ENCODE measurements at regions of chr14 and their contacts with region 1.

Region 1: GRCh38 chr14:53539489-53540126 is 386.5 kb upstream of the DDHD1 start:
- DNase-seq: peak; percentile 73
- ATAC-seq: peak; percentile 90
- H3K4me3 ChIP-seq: no peak overlapping the region
- H3K27ac ChIP-seq: no peak overlapping the region
- H3K4me1 ChIP-seq: peaks cover 15% of the 10 kb centered on the region
- H3K27me3 ChIP-seq: no peaks in the 10 kb centered on the region
- CTCF ChIP-seq: peak; percentile 91
- EP300 ChIP-seq: no peak
- POLR2A ChIP-seq: no peak
- RAD21 ChIP-seq: peak; percentile 88

Region 2: GRCh38 chr14:53161758-53162435 is 377.7 kb before region 1 on chr14:
- CTCF ChIA-PET with region 1: no interaction called
- POLR2A ChIA-PET with region 1: no interaction called
- in situ Hi-C with region 1: no loop called
- intact Hi-C with region 1: no loop called
- DNase-seq: no peak
- ATAC-seq: no peak
- H3K4me3 ChIP-seq: no peak overlapping the region
- H3K27ac ChIP-seq: no peak overlapping the region
- H3K4me1 ChIP-seq: no peaks in the 10 kb centered on the region
- H3K27me3 ChIP-seq: no peaks in the 10 kb centered on the region
- CTCF ChIP-seq: no peak
- EP300 ChIP-seq: no peak
- POLR2A ChIP-seq: no peak
- RAD21 ChIP-seq: no peak

Region 3: GRCh38 chr14:53391151-53391550 is 148.5 kb before region 1 on chr14:
- CTCF ChIA-PET with region 1: no interaction called
- POLR2A ChIA-PET with region 1: no interaction called
- in situ Hi-C with region 1: no loop called
- intact Hi-C with region 1: no loop called
- DNase-seq: peak; percentile 13
- ATAC-seq: no peak
- H3K4me3 ChIP-seq: no peak overlapping the region
- H3K27ac ChIP-seq: no peak overlapping the region
- H3K4me1 ChIP-seq: no peaks in the 10 kb centered on the region
- H3K27me3 ChIP-seq: peaks cover 0 to 21% of the 10 kb centered on the region in 2 experiments; a peak in 3 of 5 replicates
- CTCF ChIP-seq: no peak
- EP300 ChIP-seq: no peak
- POLR2A ChIP-seq: no peak
- RAD21 ChIP-seq: no peak

Region 4: GRCh38 chr14:53432378-53432802 is 107.2 kb before region 1 on chr14:
- CTCF ChIA-PET with region 1: interaction called, 3 read pairs
- POLR2A ChIA-PET with region 1: no interaction called
- in situ Hi-C with region 1: no loop called
- intact Hi-C with region 1: loop called (anchors 2 kb)
- DNase-seq: peak; percentile 59
- ATAC-seq: peak; percentile 92
- H3K4me3 ChIP-seq: no peak overlapping the region
- H3K27ac ChIP-seq: no peak overlapping the region
- H3K4me1 ChIP-seq: peaks cover 27% of the 10 kb centered on the region
- H3K27me3 ChIP-seq: no peaks in the 10 kb centered on the region
- CTCF ChIP-seq: peak; percentile 92
- EP300 ChIP-seq: no peak
- POLR2A ChIP-seq: no peak
- RAD21 ChIP-seq: peak; percentile 88

Region 5: GRCh38 chr14:53663709-53664108 is 124.1 kb after region 1 on chr14:
- CTCF ChIA-PET with region 1: interaction called, 5 read pairs
- POLR2A ChIA-PET with region 1: no interaction called
- in situ Hi-C with region 1: no loop called
- intact Hi-C with region 1: loop called (anchors 2 kb)
- DNase-seq: peak; percentile 76
- ATAC-seq: peak; percentile 99
- H3K4me3 ChIP-seq: no peak overlapping the region
- H3K27ac ChIP-seq: no peak overlapping the region
- H3K4me1 ChIP-seq: peaks cover 17% of the 10 kb centered on the region
- H3K27me3 ChIP-seq: no peaks in the 10 kb centered on the region
- CTCF ChIP-seq: peak; percentile 69
- EP300 ChIP-seq: no peak
- POLR2A ChIP-seq: no peak
- RAD21 ChIP-seq: peak; percentile 80

Region 6: GRCh38 chr14:54001189-54001913 is 461.7 kb after region 1 on chr14:
- CTCF ChIA-PET with region 1: no interaction called
- POLR2A ChIA-PET with region 1: no interaction called
- in situ Hi-C with region 1: no loop called
- intact Hi-C with region 1: loop called (anchors 1 kb)
- DNase-seq: peak; percentile 72
- ATAC-seq: peak; percentile 85
- H3K4me3 ChIP-seq: peak overlapping the region in 1 of 3 experiments; percentile 5; a peak in 1 of 6 replicates
- H3K27ac ChIP-seq: peak overlapping the region; percentile 55
- H3K4me1 ChIP-seq: peaks cover 52% of the 10 kb centered on the region
- H3K27me3 ChIP-seq: no peaks in the 10 kb centered on the region
- CTCF ChIP-seq: peak; percentile 48
- EP300 ChIP-seq: peak in 1 of 2 experiments; percentile 51; a peak in 1 of 4 replicates
- POLR2A ChIP-seq: no peak
- RAD21 ChIP-seq: peak; percentile 42; the same call in 1 of the 2 replicates

Region 7: GRCh38 chr14:54175298-54175942 is 635.8 kb after region 1 on chr14:
- CTCF ChIA-PET with region 1: no interaction called
- POLR2A ChIA-PET with region 1: no interaction called
- in situ Hi-C with region 1: no loop called
- intact Hi-C with region 1: loop called (anchors 1 kb)
- DNase-seq: peak; percentile 89
- ATAC-seq: peak; percentile 78
- H3K4me3 ChIP-seq: no peak overlapping the region; a peak in 1 of 6 replicates
- H3K27ac ChIP-seq: peak overlapping the region; percentile 61
- H3K4me1 ChIP-seq: peaks cover 64% of the 10 kb centered on the region
- H3K27me3 ChIP-seq: no peaks in the 10 kb centered on the region
- CTCF ChIP-seq: peak; percentile 85
- EP300 ChIP-seq: peak in 1 of 2 experiments; percentile 59; a peak in 2 of 4 replicates
- POLR2A ChIP-seq: no peak
- RAD21 ChIP-seq: peak; percentile 85

Region 8: GRCh38 chr14:54338696-54339317 is 799.2 kb after region 1 on chr14:
- CTCF ChIA-PET with region 1: no interaction called
- POLR2A ChIA-PET with region 1: no interaction called
- in situ Hi-C with region 1: loop called (anchors 5 kb)
- intact Hi-C with region 1: no loop called
- DNase-seq: no peak
- ATAC-seq: no peak
- H3K4me3 ChIP-seq: no peak overlapping the region
- H3K27ac ChIP-seq: no peak overlapping the region
- H3K4me1 ChIP-seq: peaks cover 16% of the 10 kb centered on the region
- H3K27me3 ChIP-seq: no peaks in the 10 kb centered on the region
- CTCF ChIP-seq: peak; percentile 55
- EP300 ChIP-seq: no peak
- POLR2A ChIP-seq: no peak
- RAD21 ChIP-seq: no peak

Measured in HepG2 (cell line).